Naive thymus-derived CD4-positive, alpha-beta T cell (primary cell): ENCODE measurements at regions of chr12 and their contacts with region 1.

Region 1: GRCh38 chr12:121773011-121773777 is 20.3 kb downstream of the RHOF start:
- DNase-seq: peak; percentile 64 to 79 (median 75)
- ATAC-seq: peak; percentile 91
- H3K4me3 ChIP-seq: no peak overlapping the region
- H3K4me3 Mint-ChIP-seq: no peak overlapping the region
- H3K27ac ChIP-seq: no peak overlapping the region
- H3K27ac Mint-ChIP-seq: peak overlapping the region in 8 of 9 donors; percentile 15 to 88 (median 59)
- H3K4me1 ChIP-seq: peaks cover 14 to 16% of the 10 kb centered on the region in 2 donors
- H3K4me1 Mint-ChIP-seq: peaks cover 3 to 15% (median 10%) of the 10 kb centered on the region in 7 donors
- H3K27me3 ChIP-seq: no peaks in the 10 kb centered on the region
- H3K27me3 Mint-ChIP-seq: no peaks in the 10 kb centered on the region

Region 2: GRCh38 chr12:121334513-121335343 is 438.5 kb before region 1 on chr12:
- CTCF ChIA-PET with region 1: no interaction called
- POLR2A ChIA-PET with region 1: no interaction called
- intact Hi-C with region 1: loop called in 1 of 2 experiments (anchors 2 kb)
- DNase-seq: peak in 8 of 9 donors; percentile 15 to 57 (median 46)
- ATAC-seq: peak; percentile 92
- H3K4me3 ChIP-seq: no peak overlapping the region
- H3K4me3 Mint-ChIP-seq: no peak overlapping the region
- H3K27ac ChIP-seq: no peak overlapping the region
- H3K27ac Mint-ChIP-seq: peak overlapping the region in 2 of 9 donors; percentile 14 to 76
- H3K4me1 ChIP-seq: peaks cover 0 to 3% of the 10 kb centered on the region in 2 donors
- H3K4me1 Mint-ChIP-seq: peaks cover 0 to 7% (median 5%) of the 10 kb centered on the region in 7 donors
- H3K27me3 ChIP-seq: no peaks in the 10 kb centered on the region
- H3K27me3 Mint-ChIP-seq: no peaks in the 10 kb centered on the region

Region 3: GRCh38 chr12:121483949-121484348 is 289.2 kb before region 1 on chr12:
- CTCF ChIA-PET with region 1: no interaction called
- POLR2A ChIA-PET with region 1: no interaction called
- intact Hi-C with region 1: no loop called
- DNase-seq: no peak
- ATAC-seq: no peak
- H3K4me3 ChIP-seq: no peak overlapping the region
- H3K4me3 Mint-ChIP-seq: peak overlapping the region in 1 of 10 donors; percentile 61
- H3K27ac ChIP-seq: no peak overlapping the region
- H3K27ac Mint-ChIP-seq: peak overlapping the region in 1 of 9 donors; percentile 57
- H3K4me1 ChIP-seq: no peaks in the 10 kb centered on the region
- H3K4me1 Mint-ChIP-seq: peaks cover 0 to 13% (median 0%) of the 10 kb centered on the region in 7 donors
- H3K27me3 ChIP-seq: no peaks in the 10 kb centered on the region
- H3K27me3 Mint-ChIP-seq: no peaks in the 10 kb centered on the region

Region 4: DNA sequence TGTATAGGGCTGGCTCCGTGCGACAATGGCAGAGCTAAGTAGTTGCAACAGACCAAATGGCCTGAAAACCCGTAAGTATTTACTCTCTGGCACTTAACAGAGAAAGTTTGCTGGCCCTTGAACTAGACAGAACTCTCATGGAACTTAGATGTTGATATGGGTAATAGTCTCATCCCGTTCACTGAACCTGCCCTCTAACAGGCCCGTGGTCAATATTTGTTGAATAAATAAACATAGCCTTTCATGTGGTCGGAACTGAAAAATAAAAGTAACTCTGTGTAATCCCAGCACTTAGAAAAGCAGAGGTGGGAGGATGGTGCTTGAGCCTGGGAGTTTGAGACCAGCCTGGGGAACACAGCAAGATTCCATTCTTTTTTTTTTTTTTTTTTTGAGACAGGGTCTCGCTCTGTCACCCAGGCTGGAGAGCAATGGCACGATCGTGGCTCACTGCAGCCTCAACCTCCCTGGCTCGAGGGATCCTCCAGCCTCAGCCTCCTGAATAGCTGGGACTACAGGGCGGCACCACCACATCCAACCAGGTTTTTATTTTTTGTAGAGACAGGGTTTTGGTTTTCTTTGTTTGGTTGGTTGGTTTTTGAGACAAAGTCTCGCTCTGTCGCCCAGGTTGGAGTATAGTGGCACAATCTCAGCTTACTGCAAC is 222.1 kb before region 1 on chr12:
- CTCF ChIA-PET with region 1: interaction called, 4 read pairs
- POLR2A ChIA-PET with region 1: no interaction called
- intact Hi-C with region 1: loop called in 1 of 2 experiments (anchors 1 kb)
- DNase-seq: no peak
- ATAC-seq: no peak
- H3K4me3 ChIP-seq: no peak overlapping the region
- H3K4me3 Mint-ChIP-seq: no peak overlapping the region
- H3K27ac ChIP-seq: no peak overlapping the region
- H3K27ac Mint-ChIP-seq: no peak overlapping the region
- H3K4me1 ChIP-seq: peaks cover 0 to 12% of the 10 kb centered on the region in 2 donors
- H3K4me1 Mint-ChIP-seq: peaks cover 0 to 7% (median 3%) of the 10 kb centered on the region in 7 donors
- H3K27me3 ChIP-seq: no peaks in the 10 kb centered on the region
- H3K27me3 Mint-ChIP-seq: no peaks in the 10 kb centered on the region

Region 5: DNA sequence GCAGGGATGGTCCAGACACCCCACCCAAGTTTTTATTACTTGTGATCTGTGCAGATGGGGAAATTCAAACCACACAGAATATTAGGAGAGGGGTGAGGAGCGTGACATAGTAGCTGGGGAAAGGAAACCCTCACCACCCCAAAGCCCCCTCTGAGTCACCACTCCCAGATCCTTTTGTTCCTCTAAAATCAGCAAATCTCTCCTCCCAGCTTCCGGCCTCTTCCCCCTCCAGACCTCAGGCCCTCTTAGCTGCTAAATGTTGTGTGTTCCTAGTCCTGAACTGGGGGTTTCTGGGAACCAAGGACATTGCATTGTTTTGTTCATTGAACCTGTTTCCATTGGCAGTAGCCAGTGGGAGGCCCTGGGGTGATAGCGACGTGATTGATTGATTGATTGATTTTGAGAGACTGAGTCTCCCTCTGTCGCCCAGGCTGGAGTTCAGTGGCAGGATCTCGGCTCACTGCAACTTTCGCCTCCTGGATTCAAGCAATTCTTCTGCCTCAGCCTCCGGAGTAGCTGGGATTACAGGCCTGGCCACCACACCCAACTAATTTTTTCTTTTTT is 152.8 kb before region 1 on chr12:
- CTCF ChIA-PET with region 1: no interaction called
- POLR2A ChIA-PET with region 1: no interaction called
- intact Hi-C with region 1: no loop called
- DNase-seq: no peak
- ATAC-seq: no peak
- H3K4me3 ChIP-seq: no peak overlapping the region
- H3K4me3 Mint-ChIP-seq: no peak overlapping the region
- H3K27ac ChIP-seq: no peak overlapping the region
- H3K27ac Mint-ChIP-seq: peak overlapping the region in 1 of 9 donors; percentile 55
- H3K4me1 ChIP-seq: peaks cover 7% of the 10 kb centered on the region in 2 donors
- H3K4me1 Mint-ChIP-seq: peaks cover 4 to 12% (median 8%) of the 10 kb centered on the region in 7 donors
- H3K27me3 ChIP-seq: no peaks in the 10 kb centered on the region
- H3K27me3 Mint-ChIP-seq: no peaks in the 10 kb centered on the region

Region 6: GRCh38 chr12:121712461-121713256 is 60.5 kb before region 1 on chr12 and contains the start of gene TMEM120B:
- CTCF ChIA-PET with region 1: interaction called, 3 read pairs
- POLR2A ChIA-PET with region 1: interaction called, 3 read pairs
- intact Hi-C with region 1: loop called (anchors 1 kb)
- DNase-seq: peak; percentile 75 to 91 (median 86)
- ATAC-seq: peak; percentile 97
- H3K4me3 ChIP-seq: peak within 1 kb of the TSS; percentile 99
- H3K4me3 Mint-ChIP-seq: peak within 1 kb of the TSS; percentile 84 to 97 (median 94)
- H3K27ac ChIP-seq: peak within 1 kb of the TSS; percentile 82
- H3K27ac Mint-ChIP-seq: peak within 1 kb of the TSS; percentile 86 to 96 (median 92)
- H3K4me1 ChIP-seq: peaks cover 11 to 12% of the 10 kb centered on the region in 2 donors
- H3K4me1 Mint-ChIP-seq: peaks cover 7 to 37% (median 26%) of the 10 kb centered on the region in 7 donors
- H3K27me3 ChIP-seq: no peaks in the 10 kb centered on the region
- H3K27me3 Mint-ChIP-seq: no peaks in the 10 kb centered on the region
- total RNA-seq, gene TMEM120B: 7.3 to 14.3 (median 9.2) TPM

Region 7: DNA sequence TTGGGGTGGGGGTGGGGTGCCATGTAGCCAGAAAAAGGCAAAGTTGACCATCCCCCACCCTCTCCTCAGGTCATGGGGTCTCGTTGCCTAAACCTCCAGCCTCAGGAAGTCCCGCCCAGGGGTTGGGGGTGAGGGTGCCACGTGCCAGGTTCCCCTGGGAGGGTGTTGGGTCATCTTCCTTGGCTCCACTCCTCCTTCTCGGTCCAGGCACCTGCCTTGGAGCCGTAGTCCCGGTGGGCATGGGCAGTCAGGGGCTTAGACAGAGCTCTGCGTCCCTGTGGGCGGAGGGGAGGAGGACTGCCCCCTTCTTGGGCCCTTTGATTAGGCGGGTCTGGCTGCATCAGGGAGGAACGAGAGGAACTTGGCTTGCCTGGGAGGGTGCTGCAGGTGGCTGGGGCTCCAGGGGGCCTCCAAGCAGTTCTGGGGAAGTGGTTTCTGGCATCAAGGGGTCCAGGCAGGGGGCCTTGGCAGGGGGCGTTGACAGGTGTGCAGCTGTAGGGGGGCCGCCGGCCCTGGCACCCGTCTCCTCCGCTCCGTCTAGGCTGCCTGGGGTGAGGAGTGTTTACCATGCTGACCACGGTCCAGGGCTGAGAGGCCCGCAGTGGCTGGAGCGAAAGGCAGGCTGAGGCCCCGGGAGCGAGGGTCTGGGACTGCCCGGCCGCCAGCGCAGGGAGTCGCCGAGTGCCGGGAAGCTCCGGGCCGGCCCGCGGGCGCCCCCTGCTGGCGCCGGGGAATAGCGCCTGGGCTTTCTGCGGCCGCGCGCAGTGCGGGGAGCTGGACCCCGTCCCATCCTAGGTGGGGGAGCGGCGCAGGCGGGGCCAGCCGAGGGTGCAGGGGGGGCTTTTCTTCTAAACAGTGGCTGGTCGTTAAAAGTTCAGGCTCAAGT is 38.5 kb after region 1 on chr12:
- CTCF ChIA-PET with region 1: interaction called, 7 read pairs
- POLR2A ChIA-PET with region 1: interaction called, 1,941 read pairs
- intact Hi-C with region 1: loop called (anchors 1 kb)
- DNase-seq: peak in 8 of 9 donors; percentile 55 to 86 (median 75)
- ATAC-seq: peak; percentile 92
- H3K4me3 ChIP-seq: peak overlapping the region; percentile 74
- H3K4me3 Mint-ChIP-seq: peak overlapping the region; percentile 75 to 92 (median 84)
- H3K27ac ChIP-seq: peak overlapping the region; percentile 63
- H3K27ac Mint-ChIP-seq: peak overlapping the region; percentile 23 to 92 (median 75)
- H3K4me1 ChIP-seq: peaks cover 38 to 48% of the 10 kb centered on the region in 2 donors
- H3K4me1 Mint-ChIP-seq: peaks cover 29 to 69% (median 47%) of the 10 kb centered on the region in 7 donors
- H3K27me3 ChIP-seq: no peaks in the 10 kb centered on the region
- H3K27me3 Mint-ChIP-seq: no peaks in the 10 kb centered on the region

Region 8: GRCh38 chr12:122040579-122041386 is 267.6 kb after region 1 on chr12:
- CTCF ChIA-PET with region 1: no interaction called
- POLR2A ChIA-PET with region 1: no interaction called
- intact Hi-C with region 1: no loop called
- DNase-seq: no peak
- ATAC-seq: no peak
- H3K4me3 ChIP-seq: no peak overlapping the region
- H3K4me3 Mint-ChIP-seq: no peak overlapping the region
- H3K27ac ChIP-seq: no peak overlapping the region
- H3K27ac Mint-ChIP-seq: peak overlapping the region in 1 of 9 donors; percentile 20
- H3K4me1 ChIP-seq: no peaks in the 10 kb centered on the region
- H3K4me1 Mint-ChIP-seq: no peaks in the 10 kb centered on the region
- H3K27me3 ChIP-seq: no peaks in the 10 kb centered on the region
- H3K27me3 Mint-ChIP-seq: no peaks in the 10 kb centered on the region

Region 9: GRCh38 chr12:123163227-123163626 is 1390.0 kb after region 1 on chr12:
- CTCF ChIA-PET with region 1: no interaction called
- POLR2A ChIA-PET with region 1: no interaction called
- intact Hi-C with region 1: no loop called
- DNase-seq: no peak
- ATAC-seq: no peak
- H3K4me3 ChIP-seq: no peak overlapping the region
- H3K4me3 Mint-ChIP-seq: no peak overlapping the region
- H3K27ac ChIP-seq: no peak overlapping the region
- H3K27ac Mint-ChIP-seq: peak overlapping the region in 1 of 9 donors; percentile 14
- H3K4me1 ChIP-seq: no peaks in the 10 kb centered on the region
- H3K4me1 Mint-ChIP-seq: no peaks in the 10 kb centered on the region
- H3K27me3 ChIP-seq: no peaks in the 10 kb centered on the region
- H3K27me3 Mint-ChIP-seq: no peaks in the 10 kb centered on the region